ENCODE measurements at regions of chr6 and their contacts with region 1.

Region 1: DNA sequence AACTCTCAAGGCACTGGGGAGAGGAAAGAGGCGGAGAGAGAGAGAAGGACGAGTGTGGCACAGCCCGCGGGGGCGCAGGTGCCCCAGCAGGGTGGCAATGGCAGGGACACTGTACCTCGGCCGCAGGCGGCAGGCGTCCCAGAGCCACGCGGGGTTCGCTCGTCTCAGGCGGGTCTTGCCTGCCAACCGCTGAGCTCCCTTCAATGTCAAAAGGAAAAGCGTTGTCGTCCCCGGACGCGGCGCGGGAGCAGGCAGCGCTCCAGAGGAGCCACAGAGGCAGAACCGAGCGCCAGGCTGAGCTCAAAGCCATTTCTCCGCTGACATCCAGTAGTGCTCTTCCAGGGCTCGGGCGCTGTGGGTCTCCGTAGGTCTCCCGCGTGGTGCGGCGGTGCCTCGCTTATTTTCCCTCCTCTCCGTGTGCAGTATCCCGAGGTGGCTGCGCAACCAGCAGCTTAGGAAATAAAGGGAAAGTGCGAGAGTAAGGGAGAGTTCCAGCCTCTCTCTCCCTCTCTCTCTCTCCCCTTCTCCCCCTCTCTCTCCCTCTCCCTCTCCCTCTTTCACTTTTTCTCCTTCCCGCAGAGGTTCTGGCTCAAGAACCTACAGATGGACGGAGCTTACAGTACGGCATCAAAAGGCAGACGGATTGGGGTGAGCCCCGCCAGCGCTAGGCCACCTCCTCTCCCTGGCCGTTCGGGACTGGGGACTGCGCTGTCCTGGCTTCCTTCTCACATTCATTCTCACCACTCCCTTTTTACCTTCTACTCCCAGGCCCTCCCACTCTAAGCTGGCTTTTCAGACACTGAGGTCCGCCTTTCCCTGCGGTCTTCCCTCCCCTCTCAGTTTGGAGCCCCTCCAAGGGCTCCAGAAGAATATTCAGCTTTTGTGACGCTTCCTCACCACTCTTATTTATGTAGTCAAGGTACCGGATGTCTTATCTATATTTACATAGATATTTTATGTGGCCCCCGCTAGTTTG is at the start of gene LAMA4:
- DNase-seq: peak; percentile 85
- ATAC-seq: peak; percentile 69
- total RNA-seq, gene LAMA4: 83.0 TPM

Region 2: GRCh38 chr6:112180095-112180820 is 73.9 kb before region 1 on chr6:
- intact Hi-C with region 1: loop called (anchors 2 kb)
- DNase-seq: no peak
- ATAC-seq: no peak

Region 3: GRCh38 chr6:112199001-112199403 is 55.1 kb before region 1 on chr6:
- intact Hi-C with region 1: loop called (anchors 5 kb)
- DNase-seq: no peak
- ATAC-seq: no peak

Region 4: DNA sequence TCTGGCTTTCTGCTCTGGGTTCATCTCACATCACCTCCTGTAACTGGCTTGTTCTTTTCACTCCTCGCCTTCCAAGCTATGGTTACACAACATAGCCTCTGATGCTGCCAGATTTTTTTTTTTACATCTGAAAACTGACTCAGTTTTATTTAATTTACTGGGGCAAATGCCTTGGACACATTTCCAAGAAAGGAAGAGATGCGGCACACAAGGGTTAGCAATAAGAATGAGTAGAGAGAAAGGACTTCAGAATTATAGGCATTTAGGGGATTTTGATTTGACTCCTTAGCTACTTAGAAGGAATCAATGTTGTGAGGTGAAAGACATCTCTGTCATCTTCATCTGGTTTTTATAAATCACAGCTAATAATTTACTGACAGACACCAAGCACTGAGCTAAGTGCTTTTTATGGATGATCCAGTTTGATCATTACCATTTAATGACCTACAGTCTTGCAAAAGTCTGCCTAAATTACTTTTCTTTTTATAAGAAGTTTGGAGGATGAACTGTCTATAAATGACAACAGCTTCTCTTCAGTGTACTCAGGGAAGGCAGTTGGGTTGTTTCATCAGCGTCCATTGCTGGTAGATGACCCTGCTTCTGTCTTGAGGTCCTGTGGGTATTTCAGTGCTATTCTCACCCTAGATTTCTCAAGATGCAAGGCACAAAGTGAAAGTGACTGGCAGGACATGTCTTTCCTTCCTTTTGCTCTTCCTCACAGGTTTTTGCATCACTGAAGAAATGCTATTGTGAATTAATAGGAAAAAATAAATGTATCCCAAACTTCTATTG is 30.9 kb before region 1 on chr6:
- intact Hi-C with region 1: loop called (anchors 1 kb)
- DNase-seq: no peak
- ATAC-seq: peak; percentile 72

Region 5: GRCh38 chr6:112237595-112237994 is 16.5 kb before region 1 on chr6:
- intact Hi-C with region 1: loop called (anchors 2 kb)
- DNase-seq: no peak
- ATAC-seq: peak; percentile 75

Region 6: DNA sequence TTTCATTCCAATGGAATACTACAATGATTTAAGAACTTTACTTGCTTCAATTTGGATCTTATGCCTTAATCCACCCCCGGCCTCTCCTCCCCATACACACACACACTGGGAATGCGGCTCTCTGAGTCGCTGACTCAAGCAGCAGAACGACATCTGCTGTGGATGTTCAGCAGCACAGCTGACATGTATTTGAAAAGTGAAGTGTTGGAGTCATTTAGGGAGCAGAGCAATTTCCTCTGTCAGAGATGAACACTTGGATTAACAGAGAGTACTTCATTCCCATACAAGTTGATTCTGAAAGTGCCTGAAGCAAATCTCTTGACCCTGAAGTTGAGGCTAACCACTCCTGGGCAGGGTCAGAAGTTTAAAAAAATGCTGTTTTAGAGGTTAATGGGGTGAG is 28.1 kb after region 1 on chr6:
- intact Hi-C with region 1: loop called (anchors 2 kb)
- DNase-seq: peak; percentile 76
- ATAC-seq: peak; percentile 90